A673 (cell line): ENCODE measurements at regions of chr15 and their contacts with region 1.

Region 1: GRCh38 chr15:75453703-75454470 is 2.4 kb upstream of the SIN3A start:
- DNase-seq: peak; percentile 100
- H3K4me3 ChIP-seq: peak overlapping the region; percentile 81
- H3K27ac ChIP-seq: peak overlapping the region; percentile 94
- H3K4me1 ChIP-seq: peaks cover 9% of the 10 kb centered on the region
- H3K27me3 ChIP-seq: no peaks in the 10 kb centered on the region
- CTCF ChIP-seq: no peak

Region 2: DNA sequence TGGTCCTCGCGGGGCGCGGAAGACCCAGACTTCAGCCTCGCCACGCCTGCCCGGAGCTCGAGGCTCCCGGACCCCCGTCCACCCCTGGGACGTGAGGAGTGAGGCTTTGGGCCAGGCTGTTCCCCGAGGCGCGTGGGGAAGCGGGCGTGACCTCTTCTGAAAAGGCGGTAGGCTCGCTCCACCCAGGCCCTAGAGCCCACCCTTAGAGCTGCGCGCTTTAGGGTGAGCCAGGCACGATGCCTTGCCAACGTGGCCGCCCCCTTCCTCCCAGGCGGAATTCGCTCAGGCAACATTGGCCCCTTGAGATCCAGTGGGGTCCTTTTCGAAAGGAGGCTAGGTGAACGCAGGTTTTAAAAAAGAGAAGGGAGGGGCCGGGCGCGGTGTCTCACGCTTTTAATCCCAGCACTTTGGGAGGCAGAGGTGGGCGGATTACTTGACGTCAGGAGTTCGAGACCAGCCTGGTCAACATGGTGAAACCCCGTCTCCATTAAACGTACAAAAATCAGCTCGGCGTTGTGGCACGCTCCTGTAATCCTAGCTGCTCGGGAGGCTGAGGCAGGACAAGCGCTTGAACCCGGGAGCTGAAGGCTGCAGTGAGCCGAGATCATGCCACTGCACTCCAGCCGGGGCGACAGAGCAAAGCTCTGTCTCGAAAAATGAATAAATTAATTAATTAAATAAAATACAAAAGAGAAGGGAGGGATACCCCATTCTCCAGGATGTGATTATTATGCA is 496.4 kb before region 1 on chr15:
- CTCF ChIA-PET with region 1: no interaction called
- POLR2A ChIA-PET with region 1: interaction called, 19 read pairs
- intact Hi-C with region 1: no loop called
- DNase-seq: peak; percentile 63
- H3K4me3 ChIP-seq: peak overlapping the region; percentile 66
- H3K27ac ChIP-seq: peak overlapping the region; percentile 73
- H3K4me1 ChIP-seq: peaks cover 61% of the 10 kb centered on the region
- H3K27me3 ChIP-seq: no peaks in the 10 kb centered on the region
- CTCF ChIP-seq: no peak

Region 3: DNA sequence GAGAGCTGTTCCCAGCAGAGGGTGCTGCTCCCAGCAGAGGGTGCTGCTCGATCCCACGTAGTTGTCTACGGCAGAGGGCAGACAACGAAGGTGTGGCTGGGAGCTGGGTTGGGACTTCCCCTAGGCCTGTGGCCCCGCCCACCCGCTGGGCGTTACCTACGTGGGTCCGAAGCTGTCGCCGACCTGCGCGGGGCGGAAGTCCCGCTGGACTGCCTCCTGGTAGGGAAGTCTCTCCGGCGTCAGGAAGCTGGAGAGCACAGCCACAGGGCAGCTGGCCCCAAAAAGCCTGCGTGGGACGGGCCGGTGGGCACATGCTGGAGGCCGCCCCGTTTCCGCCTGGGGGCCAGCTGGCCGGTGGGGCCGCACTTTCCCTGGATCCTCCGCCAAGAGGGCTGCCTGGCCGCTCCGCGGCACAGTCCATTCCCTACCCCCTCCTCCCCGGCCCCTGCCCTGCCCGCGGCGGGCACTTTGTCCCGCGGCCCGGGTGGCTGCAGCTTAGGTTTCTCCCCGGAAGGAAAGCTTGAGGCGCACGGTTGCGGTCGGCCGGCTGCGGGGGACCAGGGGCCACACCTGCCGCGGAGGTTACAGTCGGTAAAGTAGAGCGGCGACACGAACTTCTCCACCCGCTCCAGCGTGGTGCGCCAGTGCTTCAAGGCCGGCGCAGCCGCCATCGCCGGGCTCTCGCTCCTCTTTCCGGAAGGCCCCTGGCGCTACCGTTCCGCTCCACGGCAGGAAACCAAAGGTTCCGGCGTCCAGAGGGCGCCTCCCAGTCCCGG is 85.8 kb before region 1 on chr15 and contains the start of gene MAN2C1:
- CTCF ChIA-PET with region 1: interaction called, 21 read pairs
- POLR2A ChIA-PET with region 1: interaction called, 7 read pairs
- intact Hi-C with region 1: no loop called
- DNase-seq: peak; percentile 97
- H3K4me3 ChIP-seq: peak within 1 kb of the TSS; percentile 95
- H3K27ac ChIP-seq: peak within 1 kb of the TSS; percentile 98
- H3K4me1 ChIP-seq: peaks cover 13% of the 10 kb centered on the region
- H3K27me3 ChIP-seq: no peaks in the 10 kb centered on the region
- CTCF ChIP-seq: peak; percentile 94
- total RNA-seq, gene MAN2C1: 169 and 205 TPM in 2 replicates

Region 4: DNA sequence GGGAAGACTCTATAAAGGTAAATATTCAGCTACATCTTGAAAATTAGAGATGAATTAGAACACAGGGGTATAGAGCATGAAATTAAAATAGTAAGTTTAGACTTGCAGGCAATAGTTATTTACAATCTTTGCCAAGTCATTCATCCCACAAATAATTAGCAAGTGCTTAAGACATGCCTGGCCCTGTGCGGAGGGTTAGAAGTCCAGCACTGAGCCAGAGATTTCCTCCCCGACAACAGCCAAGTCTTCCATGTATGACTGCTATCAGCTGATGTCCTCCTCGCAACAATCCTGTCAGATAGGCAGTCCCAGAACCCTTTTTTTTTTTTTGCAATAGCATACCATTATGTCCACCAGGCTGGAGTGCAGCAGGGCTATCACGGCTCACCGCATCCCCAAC is 17.0 kb before region 1 on chr15:
- CTCF ChIA-PET with region 1: no interaction called
- POLR2A ChIA-PET with region 1: interaction called, 11 read pairs
- intact Hi-C with region 1: no loop called
- DNase-seq: no peak
- H3K4me3 ChIP-seq: no peak overlapping the region
- H3K27ac ChIP-seq: no peak overlapping the region
- H3K4me1 ChIP-seq: no peaks in the 10 kb centered on the region
- H3K27me3 ChIP-seq: no peaks in the 10 kb centered on the region
- CTCF ChIP-seq: no peak

Region 5: GRCh38 chr15:75597667-75598341 is 143.9 kb after region 1 on chr15:
- CTCF ChIA-PET with region 1: interaction called, 3 read pairs
- POLR2A ChIA-PET with region 1: interaction called, 3 read pairs
- intact Hi-C with region 1: loop called (anchors 5 kb)
- DNase-seq: peak; percentile 70
- H3K4me3 ChIP-seq: no peak overlapping the region
- H3K27ac ChIP-seq: peak overlapping the region; percentile 85
- H3K4me1 ChIP-seq: peaks cover 33% of the 10 kb centered on the region
- H3K27me3 ChIP-seq: no peaks in the 10 kb centered on the region
- CTCF ChIP-seq: peak; percentile 63

Region 6: DNA sequence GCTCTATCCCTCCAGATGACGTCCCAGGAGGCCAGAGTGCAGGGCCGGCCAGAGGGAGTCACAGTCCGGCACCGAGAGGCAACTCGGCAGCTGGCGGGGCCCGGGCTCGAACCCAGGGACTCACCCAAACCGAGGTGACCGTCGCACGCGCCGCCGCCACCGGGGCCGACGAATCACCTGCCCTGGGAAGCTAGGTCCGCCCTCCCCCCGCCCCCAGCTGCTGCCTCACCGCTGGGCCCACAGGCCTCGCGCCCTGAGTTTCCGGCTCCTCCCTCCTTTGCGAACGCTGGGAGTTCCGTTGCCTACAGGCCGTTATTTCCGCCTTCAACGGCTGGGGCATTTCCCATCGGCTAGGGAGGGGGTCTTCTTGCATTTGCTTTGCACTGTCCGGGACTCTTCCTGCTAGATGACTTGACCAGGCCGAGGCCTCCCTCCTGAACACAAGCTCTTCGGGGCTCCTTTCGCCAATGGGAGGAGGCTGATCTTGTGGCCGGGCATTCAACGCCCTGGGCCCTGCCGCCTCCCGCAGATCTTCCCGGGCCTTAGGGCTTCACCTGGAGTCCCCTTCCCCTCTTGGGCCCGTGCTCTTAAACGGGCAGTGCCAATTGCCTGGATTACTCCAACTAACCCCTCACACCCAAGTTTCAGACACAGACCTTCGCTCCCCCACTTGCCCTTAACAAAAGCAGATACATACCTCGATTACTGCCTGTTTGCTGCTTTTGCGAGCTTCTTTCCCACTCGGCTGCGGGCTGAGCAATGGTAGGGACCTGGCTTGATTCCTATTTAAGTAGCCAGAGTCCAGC is 171.9 kb after region 1 on chr15 and contains the start of gene SNUPN:
- CTCF ChIA-PET with region 1: interaction called, 5 read pairs
- POLR2A ChIA-PET with region 1: interaction called, 6 read pairs
- intact Hi-C with region 1: loop called (anchors 5 kb)
- DNase-seq: peak; percentile 98
- H3K4me3 ChIP-seq: peak within 1 kb of the TSS; percentile 98
- H3K27ac ChIP-seq: peak within 1 kb of the TSS; percentile 99
- H3K4me1 ChIP-seq: peaks cover 16% of the 10 kb centered on the region
- H3K27me3 ChIP-seq: no peaks in the 10 kb centered on the region
- CTCF ChIP-seq: no peak
- total RNA-seq, gene SNUPN: 32.8 and 34.6 TPM in 2 replicates

Region 7: GRCh38 chr15:75639709-75640482 is 186.0 kb after region 1 on chr15 and contains the start of gene IMP3:
- CTCF ChIA-PET with region 1: interaction called, 4 read pairs
- POLR2A ChIA-PET with region 1: interaction called, 11 read pairs
- intact Hi-C with region 1: loop called (anchors 5 kb)
- DNase-seq: peak; percentile 99
- H3K4me3 ChIP-seq: peak within 1 kb of the TSS; percentile 75
- H3K27ac ChIP-seq: peak within 1 kb of the TSS; percentile 88
- H3K4me1 ChIP-seq: peaks cover 15% of the 10 kb centered on the region
- H3K27me3 ChIP-seq: no peaks in the 10 kb centered on the region
- CTCF ChIP-seq: no peak
- total RNA-seq, gene IMP3: 76.5 and 84.5 TPM in 2 replicates

Region 8: GRCh38 chr15:76368122-76368589 is 914.3 kb after region 1 on chr15:
- CTCF ChIA-PET with region 1: no interaction called
- POLR2A ChIA-PET with region 1: no interaction called
- intact Hi-C with region 1: no loop called
- DNase-seq: no peak
- H3K4me3 ChIP-seq: no peak overlapping the region
- H3K27ac ChIP-seq: no peak overlapping the region
- H3K4me1 ChIP-seq: no peaks in the 10 kb centered on the region
- H3K27me3 ChIP-seq: no peaks in the 10 kb centered on the region
- CTCF ChIP-seq: no peak